ENCODE measurements at regions of chr22 and their contacts with region 1.

Region 1: DNA sequence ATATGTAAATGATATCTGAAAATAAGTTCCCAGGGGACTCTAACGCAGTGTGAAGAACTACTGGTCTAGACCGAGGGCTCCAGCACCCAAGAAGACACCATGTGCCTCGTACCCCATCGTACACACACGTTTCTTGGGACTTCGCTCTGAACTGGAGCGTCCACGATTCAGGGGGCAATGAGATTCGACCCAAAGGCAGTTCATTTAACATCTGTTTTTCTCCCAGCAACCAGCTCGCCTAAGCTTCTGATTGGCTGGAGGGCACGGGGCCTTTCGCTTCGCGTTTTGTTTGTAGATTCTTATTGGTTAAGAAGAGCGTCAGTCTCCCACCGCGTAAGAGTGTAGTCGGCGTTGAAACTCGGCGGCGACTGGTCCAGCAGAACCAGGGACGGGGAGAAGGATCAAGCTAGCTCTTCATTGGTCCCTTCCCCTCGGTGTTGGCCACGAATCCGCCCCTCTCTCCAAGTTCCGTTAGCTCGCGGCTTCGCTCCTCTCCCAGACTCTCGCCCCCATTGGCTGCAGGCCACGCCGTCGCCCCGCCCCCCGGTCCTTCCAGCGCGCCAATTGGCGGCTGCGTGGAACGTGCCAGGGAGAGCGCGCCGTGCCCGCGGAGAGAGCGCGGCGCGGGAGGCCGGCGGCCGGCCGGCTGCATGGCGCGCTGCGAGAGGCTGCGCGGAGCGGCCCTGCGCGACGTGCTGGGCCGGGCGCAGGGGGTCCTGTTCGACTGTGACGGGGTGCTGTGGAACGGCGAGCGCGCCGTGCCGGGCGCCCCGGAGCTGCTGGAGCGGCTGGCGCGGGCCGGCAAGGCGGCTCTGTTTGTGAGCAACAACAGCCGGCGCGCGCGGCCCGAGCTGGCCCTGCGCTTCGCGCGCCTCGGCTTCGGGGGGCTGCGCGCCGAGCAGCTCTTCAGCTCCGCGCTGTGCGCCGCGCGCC is at the start of gene PDXP:
- DNase-seq: peak; percentile 99
- ATAC-seq: peak; percentile 95
- H3K4me3 ChIP-seq: peak within 1 kb of the TSS; percentile 82
- H3K27ac ChIP-seq: peak within 1 kb of the TSS; percentile 64
- H3K4me1 ChIP-seq: peaks cover 12% of the 10 kb centered on the region
- H3K27me3 ChIP-seq: no peaks in the 10 kb centered on the region
- CTCF ChIP-seq: no peak
- EP300 ChIP-seq: no peak
- POLR2A ChIP-seq: peak; percentile 84
- RAD21 ChIP-seq: no peak
- polyA plus RNA-seq, gene PDXP: 9.8 to 15.2 TPM

Region 2: GRCh38 chr22:37588546-37589215 is 69.7 kb before region 1 on chr22:
- CTCF ChIA-PET with region 1: interaction called, 8 read pairs
- POLR2A ChIA-PET with region 1: interaction called, 3 read pairs
- RAD21 ChIA-PET with region 1: interaction called, 10 read pairs
- SMC1A ChIA-PET with region 1: interaction called, 4 read pairs
- in situ Hi-C with region 1: no loop called
- intact Hi-C with region 1: no loop called
- DNase-seq: no peak
- ATAC-seq: peak; percentile 56
- H3K4me3 ChIP-seq: no peak overlapping the region
- H3K27ac ChIP-seq: no peak overlapping the region
- H3K4me1 ChIP-seq: peaks cover 31% of the 10 kb centered on the region
- H3K27me3 ChIP-seq: no peaks in the 10 kb centered on the region
- CTCF ChIP-seq: no peak
- EP300 ChIP-seq: no peak
- POLR2A ChIP-seq: no peak
- RAD21 ChIP-seq: no peak

Region 3: DNA sequence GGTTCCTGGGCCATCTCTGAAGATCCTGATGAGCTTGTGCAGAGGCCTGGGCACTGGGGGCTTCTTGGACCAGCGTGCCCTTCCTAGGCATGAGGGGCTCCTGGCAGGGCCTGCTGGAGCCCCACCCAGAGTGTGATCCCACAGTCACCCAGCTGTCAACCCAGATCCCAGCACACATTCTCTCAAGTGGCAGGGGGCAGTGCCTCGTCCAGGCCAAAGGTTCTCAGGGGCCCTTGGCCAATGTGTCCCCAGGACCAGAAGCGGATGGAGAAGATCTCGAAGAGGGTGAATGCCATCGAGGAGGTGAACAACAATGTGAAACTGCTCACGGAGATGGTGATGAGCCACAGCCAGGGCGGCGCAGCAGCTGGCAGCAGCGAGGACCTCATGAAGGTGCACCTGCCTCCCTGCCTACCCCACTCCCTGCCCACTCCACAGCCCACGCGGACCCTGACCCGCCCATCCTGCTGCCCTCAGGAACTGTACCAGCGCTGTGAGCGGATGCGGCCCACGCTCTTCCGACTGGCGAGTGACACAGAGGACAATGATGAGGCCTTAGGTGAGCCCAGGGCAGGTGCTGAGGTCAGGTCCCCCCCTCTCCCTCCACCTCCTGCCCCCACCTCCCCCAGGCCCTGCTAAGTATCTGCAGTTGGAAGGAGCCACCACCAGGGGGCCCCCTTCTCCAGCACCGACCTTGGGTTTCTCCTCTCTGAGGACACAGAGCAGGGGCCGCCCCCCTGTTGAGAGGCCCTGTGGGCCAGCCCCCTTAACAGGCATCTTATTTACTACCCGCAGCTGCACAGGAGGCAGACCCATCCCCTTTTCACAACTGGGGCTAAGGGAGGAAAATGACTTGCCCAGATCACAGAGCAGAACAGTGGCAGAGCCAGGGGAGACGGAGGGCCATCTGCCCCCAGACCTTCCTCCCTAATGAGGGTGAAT is 35.1 kb before region 1 on chr22:
- CTCF ChIA-PET with region 1: interaction called, 63 read pairs
- POLR2A ChIA-PET with region 1: interaction called, 7 read pairs
- RAD21 ChIA-PET with region 1: interaction called, 31 read pairs
- SMC1A ChIA-PET with region 1: interaction called, 23 read pairs
- in situ Hi-C with region 1: no loop called
- intact Hi-C with region 1: no loop called
- DNase-seq: no peak
- ATAC-seq: peak; percentile 88
- H3K4me3 ChIP-seq: no peak overlapping the region
- H3K27ac ChIP-seq: no peak overlapping the region
- H3K4me1 ChIP-seq: peaks cover 29% of the 10 kb centered on the region
- H3K27me3 ChIP-seq: no peaks in the 10 kb centered on the region
- CTCF ChIP-seq: peak; percentile 68 to 92 (median 74)
- EP300 ChIP-seq: no peak
- POLR2A ChIP-seq: peak; percentile 54
- RAD21 ChIP-seq: peak; percentile 85

Region 4: DNA sequence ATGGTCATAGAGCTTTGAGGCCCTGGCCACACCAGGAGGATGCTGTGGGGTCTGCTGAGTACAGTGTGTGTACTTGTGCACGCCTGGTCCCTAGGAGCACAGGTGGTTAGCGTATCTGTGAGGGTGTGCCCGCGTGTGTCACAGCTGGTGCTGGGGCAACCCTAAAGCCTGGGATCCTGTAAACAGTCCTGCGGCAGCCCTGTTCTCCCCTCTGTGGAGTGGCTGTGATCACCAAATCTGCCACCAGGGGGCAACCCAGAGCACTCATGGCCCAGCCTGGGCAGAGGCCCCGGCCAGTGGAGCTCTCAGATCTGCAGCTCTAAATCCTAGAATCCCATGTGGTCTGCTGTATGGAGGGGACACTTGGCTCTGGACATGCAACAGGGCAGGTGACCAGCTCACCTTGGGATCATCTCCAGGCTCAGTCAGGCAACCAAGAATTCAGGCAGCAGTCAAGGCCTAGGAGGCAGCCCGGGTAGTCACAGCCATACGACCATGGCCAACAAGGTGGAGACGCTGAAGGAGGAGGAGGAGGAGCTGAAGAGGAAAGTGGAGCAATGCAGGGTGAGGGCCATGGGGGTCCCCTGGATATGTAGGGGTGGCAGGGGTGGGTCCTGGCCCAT is 15.1 kb before region 1 on chr22:
- CTCF ChIA-PET with region 1: interaction called, 261 read pairs
- POLR2A ChIA-PET with region 1: interaction called, 96 read pairs
- RAD21 ChIA-PET with region 1: interaction called, 173 read pairs
- SMC1A ChIA-PET with region 1: interaction called, 108 read pairs
- in situ Hi-C with region 1: no loop called
- intact Hi-C with region 1: no loop called
- DNase-seq: no peak
- ATAC-seq: peak; percentile 79
- H3K4me3 ChIP-seq: no peak overlapping the region
- H3K27ac ChIP-seq: no peak overlapping the region
- H3K4me1 ChIP-seq: peaks cover 28% of the 10 kb centered on the region
- H3K27me3 ChIP-seq: no peaks in the 10 kb centered on the region
- CTCF ChIP-seq: peak; percentile 86 to 92 (median 89)
- EP300 ChIP-seq: no peak
- POLR2A ChIP-seq: no peak
- RAD21 ChIP-seq: peak; percentile 62

Region 5: GRCh38 chr22:37686002-37686982 is 27.9 kb after region 1 on chr22 and contains the start of gene NOL12:
- CTCF ChIA-PET with region 1: interaction called, 414 read pairs
- POLR2A ChIA-PET with region 1: interaction called, 209 read pairs
- RAD21 ChIA-PET with region 1: interaction called, 164 read pairs
- SMC1A ChIA-PET with region 1: interaction called, 157 read pairs
- in situ Hi-C with region 1: no loop called
- intact Hi-C with region 1: loop called (anchors 1 kb)
- DNase-seq: peak; percentile 72
- ATAC-seq: peak; percentile 90
- H3K4me3 ChIP-seq: peak within 1 kb of the TSS; percentile 100
- H3K27ac ChIP-seq: peak within 1 kb of the TSS; percentile 89
- H3K4me1 ChIP-seq: peaks cover 17% of the 10 kb centered on the region
- H3K27me3 ChIP-seq: no peaks in the 10 kb centered on the region
- CTCF ChIP-seq: 0 out of 6 replicates have a peak, but pooled peaks of 1 of the 3 experiments have one; percentile 5
- EP300 ChIP-seq: no peak
- POLR2A ChIP-seq: peak; percentile 86
- RAD21 ChIP-seq: no peak
- polyA plus RNA-seq, gene NOL12: 3.3 to 12.9 TPM

Region 6: GRCh38 chr22:37862570-37863325 is 204.3 kb after region 1 on chr22:
- CTCF ChIA-PET with region 1: interaction called, 18 read pairs
- POLR2A ChIA-PET with region 1: no interaction called
- RAD21 ChIA-PET with region 1: interaction called, 14 read pairs
- SMC1A ChIA-PET with region 1: interaction called, 13 read pairs
- in situ Hi-C with region 1: no loop called
- intact Hi-C with region 1: loop called (anchors 2 kb)
- DNase-seq: no peak
- ATAC-seq: no peak
- H3K4me3 ChIP-seq: no peak overlapping the region
- H3K27ac ChIP-seq: no peak overlapping the region
- H3K4me1 ChIP-seq: no peaks in the 10 kb centered on the region
- H3K27me3 ChIP-seq: no peaks in the 10 kb centered on the region
- CTCF ChIP-seq: no peak
- EP300 ChIP-seq: no peak
- POLR2A ChIP-seq: no peak
- RAD21 ChIP-seq: no peak

Measured in GM12878 (cell line).